Panc1 (cell line): ENCODE measurements at regions of chr9 and their contacts with region 1.

Region 1: DNA sequence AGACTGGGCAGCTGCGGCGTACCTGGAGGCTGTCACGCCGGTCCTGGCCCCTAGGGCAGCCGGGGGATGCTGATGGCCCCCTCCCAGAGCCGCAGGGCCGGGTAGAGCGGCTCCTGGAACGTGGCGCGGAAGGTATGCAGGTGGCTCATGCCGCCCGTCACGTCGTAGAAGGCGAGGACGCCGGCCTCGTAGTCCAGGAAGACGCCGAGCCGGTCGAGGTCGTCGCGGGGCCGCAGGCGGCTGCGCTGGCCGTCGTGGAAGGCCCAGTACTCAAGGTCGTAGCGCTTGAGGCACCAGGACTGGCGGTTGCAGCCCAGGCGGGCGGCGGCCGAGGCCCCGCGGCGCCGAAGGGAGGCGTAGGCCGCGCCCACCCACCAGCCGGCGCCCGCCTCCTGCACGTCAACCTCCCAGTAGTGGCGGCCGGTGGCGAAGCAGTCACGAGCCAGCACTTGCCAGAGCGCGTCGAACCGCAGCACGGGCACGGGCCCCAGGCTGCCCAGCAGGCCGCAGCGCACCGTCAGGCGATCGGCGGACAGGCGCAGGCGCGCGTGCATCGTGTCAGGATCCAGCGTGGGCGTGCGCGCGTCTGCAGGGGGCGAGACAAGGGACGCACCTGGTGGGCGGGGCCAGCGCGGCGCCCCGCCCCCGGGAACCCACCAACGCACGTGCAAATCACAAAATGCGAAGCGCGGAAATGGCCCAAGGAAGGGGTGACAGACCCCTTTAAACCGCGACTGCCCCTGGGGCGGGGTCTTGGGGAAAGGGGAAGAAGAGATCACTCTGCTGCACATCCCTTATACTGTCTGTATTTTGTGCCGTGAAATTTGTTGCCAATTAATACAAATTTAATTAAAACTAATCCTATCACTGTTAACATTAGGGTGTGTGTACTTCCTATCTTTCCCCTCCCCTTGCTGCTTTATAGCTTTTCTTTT is 31.2 kb downstream of the NANS start:
- DNase-seq: no peak
- ATAC-seq: no peak; the same call in 1 of the 2 replicates
- H3K4me3 ChIP-seq: no peak overlapping the region
- H3K27ac ChIP-seq: no peak overlapping the region
- H3K4me1 ChIP-seq: no peaks in the 10 kb centered on the region
- H3K27me3 ChIP-seq: no peaks in the 10 kb centered on the region
- CTCF ChIP-seq: no peak

Region 2: GRCh38 chr9:96574931-96575351 is 1512.7 kb before region 1 on chr9:
- CTCF ChIA-PET with region 1: no interaction called
- POLR2A ChIA-PET with region 1: no interaction called
- in situ Hi-C with region 1: no loop called
- intact Hi-C with region 1: no loop called
- DNase-seq: no peak
- ATAC-seq: 0 out of 2 replicates have a peak, but pooled peaks have one; percentile 48
- H3K4me3 ChIP-seq: no peak overlapping the region
- H3K27ac ChIP-seq: no peak overlapping the region
- H3K4me1 ChIP-seq: no peaks in the 10 kb centered on the region
- H3K27me3 ChIP-seq: no peaks in the 10 kb centered on the region
- CTCF ChIP-seq: no peak

Region 3: DNA sequence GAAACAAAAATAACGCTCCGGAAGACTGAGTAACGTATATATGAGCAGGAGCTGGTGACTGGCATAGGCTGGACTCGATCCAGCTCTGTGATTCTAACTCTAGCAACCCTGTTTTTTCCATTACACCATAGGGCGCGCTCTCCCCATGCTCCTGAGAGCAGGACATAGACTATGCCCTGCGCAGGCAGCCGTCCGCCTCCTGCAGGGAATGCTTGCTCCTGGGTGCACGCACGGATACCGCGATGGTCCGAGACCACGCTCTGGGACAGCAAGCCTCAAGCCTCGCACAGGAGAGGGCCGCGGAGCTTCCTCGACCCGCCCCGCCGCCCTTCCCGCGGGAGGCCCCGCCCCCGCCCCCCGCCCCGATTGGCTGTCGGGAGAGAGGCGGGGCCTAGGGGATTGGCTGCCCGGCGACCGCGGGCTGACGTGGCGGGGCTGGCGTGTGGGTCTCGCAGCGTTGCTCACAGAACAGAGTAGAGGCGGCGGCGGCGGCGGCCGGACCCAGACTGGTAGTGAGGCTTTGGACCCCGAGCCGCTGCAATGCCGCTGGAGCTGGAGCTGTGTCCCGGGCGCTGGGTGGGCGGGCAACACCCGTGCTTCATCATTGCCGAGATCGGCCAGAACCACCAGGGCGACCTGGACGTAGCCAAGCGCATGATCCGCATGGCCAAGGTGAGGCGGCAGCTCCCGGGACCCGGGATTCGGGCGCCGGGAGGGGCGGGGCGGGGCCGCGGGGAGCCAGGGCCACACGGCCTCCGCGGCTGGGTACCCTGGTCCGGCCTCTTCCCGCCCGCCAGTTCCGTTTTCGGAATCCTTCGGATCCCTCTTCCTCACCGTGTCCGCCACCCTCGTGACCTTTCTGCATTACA is 31.2 kb before region 1 on chr9 and contains the start of gene NANS:
- CTCF ChIA-PET with region 1: interaction called, 16 read pairs
- POLR2A ChIA-PET with region 1: no interaction called
- in situ Hi-C with region 1: no loop called
- intact Hi-C with region 1: no loop called
- DNase-seq: peak; percentile 56
- ATAC-seq: peak; percentile 98
- H3K4me3 ChIP-seq: peak within 1 kb of the TSS; percentile 73 to 83
- H3K27ac ChIP-seq: peak within 1 kb of the TSS; percentile 83
- H3K4me1 ChIP-seq: 0 out of 2 replicates have a peak, but pooled peaks cover 4% of the 10 kb centered on the region
- H3K27me3 ChIP-seq: no peaks in the 10 kb centered on the region
- CTCF ChIP-seq: no peak
- total RNA-seq, gene NANS: 41.0 TPM

Region 4: GRCh38 chr9:98064623-98065392 is 22.9 kb before region 1 on chr9:
- CTCF ChIA-PET with region 1: no interaction called
- POLR2A ChIA-PET with region 1: interaction called, 11 read pairs
- in situ Hi-C with region 1: no loop called
- intact Hi-C with region 1: no loop called
- DNase-seq: no peak
- ATAC-seq: no peak
- H3K4me3 ChIP-seq: no peak overlapping the region
- H3K27ac ChIP-seq: no peak overlapping the region
- H3K4me1 ChIP-seq: no peaks in the 10 kb centered on the region
- H3K27me3 ChIP-seq: no peaks in the 10 kb centered on the region
- CTCF ChIP-seq: no peak

Region 5: DNA sequence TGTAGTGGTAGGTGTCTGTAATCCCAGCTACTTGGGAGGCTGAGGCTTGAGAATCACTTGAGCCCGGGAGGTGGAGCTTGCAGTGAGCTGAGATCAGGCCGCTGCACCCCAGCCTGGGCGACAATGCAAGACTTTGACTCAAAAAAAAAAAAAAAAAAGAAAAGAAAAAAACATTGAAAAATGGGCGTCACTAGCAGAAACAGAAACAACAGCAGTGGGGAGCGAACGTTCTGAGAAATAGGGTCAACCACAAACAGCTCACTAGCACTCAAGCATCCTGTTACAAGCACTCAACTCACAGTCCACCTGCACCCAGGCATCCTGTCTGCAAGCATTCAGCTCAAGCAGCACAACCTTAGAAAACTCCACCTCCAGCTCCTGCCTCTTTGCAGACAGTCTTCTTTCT is 14.2 kb after region 1 on chr9:
- CTCF ChIA-PET with region 1: no interaction called
- POLR2A ChIA-PET with region 1: no interaction called
- in situ Hi-C with region 1: no loop called
- intact Hi-C with region 1: no loop called
- DNase-seq: no peak
- ATAC-seq: no peak
- H3K4me3 ChIP-seq: no peak overlapping the region
- H3K27ac ChIP-seq: no peak overlapping the region
- H3K4me1 ChIP-seq: no peaks in the 10 kb centered on the region
- H3K27me3 ChIP-seq: no peaks in the 10 kb centered on the region
- CTCF ChIP-seq: no peak

Region 6: GRCh38 chr9:98271479-98271878 is 183.8 kb after region 1 on chr9:
- CTCF ChIA-PET with region 1: no interaction called
- POLR2A ChIA-PET with region 1: no interaction called
- in situ Hi-C with region 1: no loop called
- intact Hi-C with region 1: no loop called
- DNase-seq: no peak
- ATAC-seq: no peak
- H3K4me3 ChIP-seq: no peak overlapping the region
- H3K27ac ChIP-seq: no peak overlapping the region
- H3K4me1 ChIP-seq: no peaks in the 10 kb centered on the region
- H3K27me3 ChIP-seq: peaks cover 6% of the 10 kb centered on the region
- CTCF ChIP-seq: no peak